CD8-positive, alpha-beta T cell (primary cell): ENCODE measurements at regions of chr13 and their contacts with region 1.

Region 1: DNA sequence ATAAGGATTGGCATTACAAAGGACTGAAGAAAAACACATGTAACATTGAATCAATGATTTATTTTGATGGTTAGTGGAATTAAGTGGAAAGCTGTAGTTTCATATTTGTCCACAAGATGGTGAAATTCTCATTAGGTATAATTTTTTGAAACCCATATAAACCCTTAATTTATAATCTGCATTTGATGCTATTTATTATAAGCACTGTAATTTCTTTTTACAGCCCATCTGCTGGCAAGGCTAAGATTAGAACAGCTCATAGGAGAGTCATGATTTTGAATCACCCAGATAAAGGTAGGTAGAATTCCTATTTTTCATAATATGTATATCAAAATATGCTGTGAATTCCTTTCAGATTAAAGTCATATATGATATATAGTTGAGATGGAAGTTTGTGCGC is 62.2 kb downstream of the DNAJC15 start:
- DNase-seq: peak in 2 of 9 experiments; percentile 29 to 48
- ATAC-seq: no peak
- H3K4me3 ChIP-seq: no peak overlapping the region
- H3K4me3 Mint-ChIP-seq: no peak overlapping the region
- H3K27ac ChIP-seq: no peak overlapping the region
- H3K27ac Mint-ChIP-seq: no peak overlapping the region
- H3K4me1 ChIP-seq: no peaks in the 10 kb centered on the region
- H3K4me1 Mint-ChIP-seq: peaks cover 14% of the 10 kb centered on the region
- H3K27me3 ChIP-seq: no peaks in the 10 kb centered on the region
- H3K27me3 Mint-ChIP-seq: no peaks in the 10 kb centered on the region
- CTCF ChIP-seq: peak; percentile 83

Region 2: GRCh38 chr13:42660333-42660965 is 425.1 kb before region 1 on chr13:
- CTCF ChIA-PET with region 1: no interaction called
- POLR2A ChIA-PET with region 1: no interaction called
- intact Hi-C with region 1: no loop called
- DNase-seq: no peak
- ATAC-seq: no peak
- H3K4me3 ChIP-seq: no peak overlapping the region
- H3K4me3 Mint-ChIP-seq: no peak overlapping the region
- H3K27ac ChIP-seq: no peak overlapping the region
- H3K27ac Mint-ChIP-seq: no peak overlapping the region
- H3K4me1 ChIP-seq: no peaks in the 10 kb centered on the region
- H3K4me1 Mint-ChIP-seq: no peaks in the 10 kb centered on the region
- H3K27me3 ChIP-seq: peaks cover 2 to 3% of the 10 kb centered on the region in 2 experiments
- H3K27me3 Mint-ChIP-seq: peaks cover 49% of the 10 kb centered on the region
- CTCF ChIP-seq: no peak

Region 3: DNA sequence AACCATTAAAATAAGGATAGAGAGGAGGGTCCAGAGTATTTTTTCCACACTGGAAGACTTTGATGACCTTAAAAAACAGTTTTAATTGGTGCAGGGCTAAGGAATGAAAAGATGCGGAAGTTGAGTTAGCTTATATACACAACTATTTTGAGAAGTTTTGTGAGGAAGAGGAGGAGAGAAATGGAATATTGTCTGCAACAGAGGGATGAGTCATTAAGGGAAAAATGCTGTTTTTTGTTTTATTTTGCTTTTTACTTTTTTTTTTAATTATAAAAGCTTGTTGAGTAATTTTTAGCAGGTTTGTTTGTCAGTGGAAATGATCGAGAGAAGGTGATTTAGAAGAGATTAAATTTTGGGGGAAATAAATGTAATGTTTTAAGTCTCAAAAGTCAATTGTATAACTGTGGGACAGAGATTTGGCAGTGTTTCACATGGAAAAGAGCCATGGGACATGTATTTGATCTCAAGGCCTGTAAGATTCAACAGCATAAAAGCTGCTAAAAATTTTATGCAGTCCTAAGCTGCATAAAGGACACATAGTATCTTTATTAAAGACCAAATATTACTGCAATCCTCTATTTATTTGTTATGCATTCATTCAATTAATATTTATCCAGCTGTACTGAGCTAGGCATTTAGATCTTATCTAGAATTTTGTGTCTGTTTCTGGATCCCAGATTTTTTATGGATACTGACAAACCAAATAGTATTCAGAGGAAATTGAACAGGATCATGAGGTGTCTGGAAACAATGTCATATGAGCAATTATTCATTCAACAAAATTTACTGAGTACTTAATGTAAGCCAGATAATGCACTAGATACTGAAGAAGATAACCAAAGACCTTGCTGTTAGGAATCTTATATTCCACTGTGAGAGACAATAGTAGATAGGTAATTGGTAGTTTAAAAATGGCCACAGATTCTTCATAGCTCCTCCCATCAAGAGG is 10.5 kb after region 1 on chr13:
- CTCF ChIA-PET with region 1: interaction called, 16 read pairs
- POLR2A ChIA-PET with region 1: interaction called, 3 read pairs
- intact Hi-C with region 1: no loop called
- DNase-seq: no peak
- ATAC-seq: no peak
- H3K4me3 ChIP-seq: no peak overlapping the region
- H3K4me3 Mint-ChIP-seq: no peak overlapping the region
- H3K27ac ChIP-seq: no peak overlapping the region
- H3K27ac Mint-ChIP-seq: no peak overlapping the region
- H3K4me1 ChIP-seq: no peaks in the 10 kb centered on the region
- H3K4me1 Mint-ChIP-seq: peaks cover 17% of the 10 kb centered on the region
- H3K27me3 ChIP-seq: no peaks in the 10 kb centered on the region
- H3K27me3 Mint-ChIP-seq: no peaks in the 10 kb centered on the region
- CTCF ChIP-seq: no peak

Region 4: GRCh38 chr13:43804461-43805070 is 719.0 kb after region 1 on chr13:
- CTCF ChIA-PET with region 1: no interaction called
- POLR2A ChIA-PET with region 1: no interaction called
- intact Hi-C with region 1: loop called (anchors 1 to 2 kb)
- DNase-seq: peak in 3 of 9 experiments; percentile 22 to 60 (median 55)
- ATAC-seq: no peak
- H3K4me3 ChIP-seq: no peak overlapping the region
- H3K4me3 Mint-ChIP-seq: no peak overlapping the region
- H3K27ac ChIP-seq: no peak overlapping the region
- H3K27ac Mint-ChIP-seq: no peak overlapping the region
- H3K4me1 ChIP-seq: no peaks in the 10 kb centered on the region
- H3K4me1 Mint-ChIP-seq: peaks cover 2% of the 10 kb centered on the region
- H3K27me3 ChIP-seq: no peaks in the 10 kb centered on the region
- H3K27me3 Mint-ChIP-seq: peaks cover 5% of the 10 kb centered on the region
- CTCF ChIP-seq: peak; percentile 69

Region 5: GRCh38 chr13:43878892-43879754 is 793.6 kb after region 1 on chr13 and contains the start of gene CCDC122:
- CTCF ChIA-PET with region 1: no interaction called
- POLR2A ChIA-PET with region 1: no interaction called
- intact Hi-C with region 1: loop called (anchors 2 to 5 kb)
- DNase-seq: peak; percentile 37 to 89 (median 69)
- ATAC-seq: peak; percentile 78
- H3K4me3 ChIP-seq: peak within 1 kb of the TSS; percentile 56 to 66
- H3K4me3 Mint-ChIP-seq: peak within 1 kb of the TSS; percentile 90
- H3K27ac ChIP-seq: peak within 1 kb of the TSS in 1 of 2 experiments; percentile 61
- H3K27ac Mint-ChIP-seq: peak within 1 kb of the TSS; percentile 84
- H3K4me1 ChIP-seq: peaks cover 10% of the 10 kb centered on the region
- H3K4me1 Mint-ChIP-seq: peaks cover 14% of the 10 kb centered on the region
- H3K27me3 ChIP-seq: no peaks in the 10 kb centered on the region
- H3K27me3 Mint-ChIP-seq: peaks cover 11% of the 10 kb centered on the region
- CTCF ChIP-seq: no peak
- total RNA-seq, gene CCDC122: not detected